ENCODE measurements at regions of chr12 and their contacts with region 1.

Region 1: DNA sequence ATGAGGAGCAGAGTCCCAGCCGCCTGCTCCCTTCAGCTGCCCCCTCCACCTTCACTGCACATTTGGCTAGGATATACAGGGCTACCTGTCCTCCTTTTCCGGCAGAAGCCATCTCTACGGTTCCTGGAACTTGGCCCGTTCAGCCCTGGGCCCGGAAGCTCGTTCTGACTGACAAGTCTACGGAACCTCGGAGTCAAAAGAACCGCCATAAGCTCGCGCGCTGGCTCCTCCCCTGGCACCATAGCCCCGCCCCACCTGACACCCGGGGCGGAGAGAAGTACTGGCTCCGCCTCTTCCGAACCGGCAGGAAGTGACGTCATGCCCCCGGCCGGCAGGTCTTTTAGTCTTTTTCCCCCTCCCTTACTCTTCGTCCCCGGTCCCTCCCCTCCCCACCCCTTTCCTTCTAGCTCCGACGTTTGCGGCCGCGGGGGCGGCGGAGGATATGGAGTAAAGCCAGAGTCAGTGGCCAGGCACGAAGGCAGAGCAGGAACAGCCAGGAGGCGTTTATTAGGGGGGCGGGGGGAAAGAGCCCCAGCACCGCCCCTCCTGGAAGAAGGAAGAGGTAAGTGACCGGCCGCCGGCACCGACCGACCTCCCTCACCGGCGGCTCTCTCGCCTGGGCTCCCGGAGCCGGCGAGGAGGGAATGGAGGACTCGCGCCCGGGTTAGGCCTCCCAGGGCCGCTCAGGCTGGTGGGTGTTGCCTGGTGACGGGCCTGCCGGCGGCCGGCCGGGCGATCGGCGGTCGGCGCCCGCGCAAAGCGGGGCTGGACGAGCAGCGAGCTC is at the starts of genes DEPDC4 and SCYL2:
- DNase-seq: peak; percentile 95
- H3K4me3 Mint-ChIP-seq: peak within 1 kb of the TSS; percentile 94
- H3K27ac Mint-ChIP-seq: peak within 1 kb of the TSS; percentile 96
- H3K4me1 Mint-ChIP-seq: peaks cover 24% of the 10 kb centered on the region
- H3K27me3 Mint-ChIP-seq: no peaks in the 10 kb centered on the region
- total RNA-seq, gene DEPDC4: 2.4 to 3.5 TPM
- total RNA-seq, gene SCYL2: 24.5 to 26.7 TPM

Region 2: GRCh38 chr12:98503592-98504367 is 1763.2 kb before region 1 on chr12:
- CTCF ChIA-PET with region 1: no interaction called
- POLR2A ChIA-PET with region 1: no interaction called
- intact Hi-C with region 1: loop called (anchors 5 kb)
- DNase-seq: peak; percentile 97
- H3K4me3 Mint-ChIP-seq: peak overlapping the region; percentile 86
- H3K27ac Mint-ChIP-seq: peak overlapping the region; percentile 99
- H3K4me1 Mint-ChIP-seq: peaks cover 39% of the 10 kb centered on the region
- H3K27me3 Mint-ChIP-seq: peaks cover 9% of the 10 kb centered on the region

Region 3: DNA sequence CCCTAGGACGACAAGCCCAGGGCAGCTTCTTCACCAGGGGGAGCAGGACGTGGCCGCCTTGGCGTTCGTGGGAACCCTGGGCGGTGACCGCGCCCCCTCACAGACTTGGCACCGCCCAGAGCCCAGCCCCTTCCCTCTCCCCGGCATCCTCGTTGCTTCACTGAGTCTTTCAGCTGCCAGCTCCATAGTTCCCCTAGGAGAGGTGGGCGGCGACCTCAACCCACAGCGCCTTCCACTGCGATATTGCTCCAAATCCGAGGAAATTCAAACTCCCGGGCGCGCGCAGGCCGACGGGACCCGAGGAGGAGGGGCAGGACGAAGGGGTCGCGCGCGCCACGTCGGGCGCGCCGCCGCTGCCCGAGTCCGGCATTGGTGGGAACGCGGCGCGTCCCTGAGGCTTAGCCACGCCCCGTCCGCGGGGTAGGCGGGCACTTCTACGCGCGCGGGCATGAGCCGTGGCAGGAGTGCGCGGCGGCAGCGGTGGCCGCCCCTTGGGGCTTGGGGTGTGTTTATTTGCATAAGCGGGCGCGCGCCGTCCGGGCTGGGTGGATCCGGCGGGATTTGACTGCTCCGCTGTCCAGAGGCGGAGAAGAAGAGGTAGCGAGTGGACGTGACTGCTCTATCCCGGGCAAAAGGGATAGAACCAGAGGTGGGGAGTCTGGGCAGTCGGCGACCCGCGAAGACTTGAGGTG is 1622.2 kb before region 1 on chr12 and contains the starts of genes APAF1 and IKBIP:
- CTCF ChIA-PET with region 1: no interaction called
- POLR2A ChIA-PET with region 1: no interaction called
- intact Hi-C with region 1: loop called (anchors 10 kb)
- DNase-seq: peak; percentile 98
- H3K4me3 Mint-ChIP-seq: peak within 1 kb of the TSS; percentile 96
- H3K27ac Mint-ChIP-seq: peak within 1 kb of the TSS; percentile 95
- H3K4me1 Mint-ChIP-seq: peaks cover 28% of the 10 kb centered on the region
- H3K27me3 Mint-ChIP-seq: no peaks in the 10 kb centered on the region
- total RNA-seq, gene APAF1: 19.6 to 20.8 TPM
- total RNA-seq, gene IKBIP: 24.9 to 26.2 TPM

Region 4: DNA sequence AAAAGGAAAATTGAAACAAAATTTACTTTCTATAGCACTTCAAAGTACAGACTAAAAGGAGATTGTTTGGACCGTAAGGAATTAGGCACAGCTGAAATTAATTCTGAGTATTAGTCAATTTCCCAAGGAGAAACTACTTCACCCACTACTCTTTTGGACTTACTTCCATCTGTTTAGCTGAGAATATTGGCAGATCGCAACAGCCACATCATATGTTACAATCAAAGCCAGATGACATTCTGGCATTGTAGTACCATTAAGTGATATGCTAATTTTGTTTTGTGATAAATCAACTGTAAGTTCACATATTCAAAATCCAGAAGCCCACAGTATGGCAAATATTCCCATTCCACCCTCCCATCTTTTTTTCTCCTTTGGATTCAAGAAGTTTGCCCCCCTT is 235.2 kb before region 1 on chr12:
- CTCF ChIA-PET with region 1: no interaction called
- POLR2A ChIA-PET with region 1: no interaction called
- intact Hi-C with region 1: no loop called
- DNase-seq: no peak
- H3K4me3 Mint-ChIP-seq: no peak overlapping the region
- H3K27ac Mint-ChIP-seq: no peak overlapping the region
- H3K4me1 Mint-ChIP-seq: no peaks in the 10 kb centered on the region
- H3K27me3 Mint-ChIP-seq: no peaks in the 10 kb centered on the region

Region 5: DNA sequence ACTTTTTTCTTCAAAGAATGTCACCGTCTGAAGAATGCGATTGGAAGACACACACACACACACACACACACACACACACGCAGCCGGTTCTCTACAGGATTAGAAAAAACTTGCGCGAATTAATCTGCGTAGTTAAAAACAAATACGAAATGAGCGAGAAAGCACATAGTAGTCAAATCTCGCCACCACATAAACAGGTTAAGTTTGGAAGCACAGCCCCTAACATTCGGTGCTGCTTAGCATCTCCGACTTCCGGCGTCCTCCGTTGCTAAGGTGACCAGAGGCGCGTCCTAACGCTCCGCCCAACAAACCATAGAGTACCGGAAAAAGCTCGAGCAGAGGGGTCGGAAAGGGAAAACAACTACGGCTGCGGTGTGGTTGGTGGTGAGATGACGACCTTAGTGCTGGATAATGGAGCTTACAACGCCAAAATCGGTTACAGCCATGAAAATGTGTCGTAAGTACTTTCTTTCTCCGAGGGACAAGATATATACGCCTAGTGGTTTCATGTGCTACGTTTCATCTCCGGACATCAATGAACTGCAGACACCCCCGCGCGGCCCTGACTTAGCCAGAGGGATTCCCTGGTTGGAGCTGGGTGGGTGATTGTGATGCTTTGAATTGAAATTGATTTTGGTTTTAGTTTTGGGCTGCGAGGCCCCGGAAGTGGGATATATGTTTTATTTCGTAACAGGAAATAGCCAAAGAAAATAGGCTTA is 66.4 kb before region 1 on chr12 and contains the start of gene ACTR6:
- CTCF ChIA-PET with region 1: interaction called, 4 read pairs
- POLR2A ChIA-PET with region 1: interaction called, 17 read pairs
- intact Hi-C with region 1: loop called (anchors 1 kb)
- DNase-seq: peak; percentile 98
- H3K4me3 Mint-ChIP-seq: peak within 1 kb of the TSS; percentile 96
- H3K27ac Mint-ChIP-seq: peak within 1 kb of the TSS; percentile 99
- H3K4me1 Mint-ChIP-seq: peaks cover 27% of the 10 kb centered on the region
- H3K27me3 Mint-ChIP-seq: no peaks in the 10 kb centered on the region
- total RNA-seq, gene ACTR6: 58.3 to 60.3 TPM

Region 6: GRCh38 chr12:101280006-101280505 is 1013.0 kb after region 1 on chr12 and contains the start of gene UTP20:
- CTCF ChIA-PET with region 1: no interaction called
- POLR2A ChIA-PET with region 1: no interaction called
- intact Hi-C with region 1: loop called (anchors 10 kb)
- DNase-seq: peak; percentile 96
- H3K4me3 Mint-ChIP-seq: peak within 1 kb of the TSS; percentile 95
- H3K27ac Mint-ChIP-seq: peak within 1 kb of the TSS; percentile 60
- H3K4me1 Mint-ChIP-seq: peaks cover 20% of the 10 kb centered on the region
- H3K27me3 Mint-ChIP-seq: peaks cover 6% of the 10 kb centered on the region
- total RNA-seq, gene UTP20: 18.1 to 20.6 TPM